Lower leg skin (tissue), 4 donors: ENCODE measurements at regions of chr2 and their contacts with region 1.

Region 1: GRCh38 chr2:181517685-181518301 is 60.6 kb downstream of the ITGA4 start:
- DNase-seq: no peak
- H3K4me3 ChIP-seq: no peak overlapping the region
- CTCF ChIP-seq: no peak
- POLR2A ChIP-seq: no peak

Region 2: GRCh38 chr2:181474227-181474881 is 43.4 kb before region 1 on chr2:
- intact Hi-C with region 1: loop called (anchors 1 kb)
- DNase-seq: no peak
- H3K4me3 ChIP-seq: no peak overlapping the region
- CTCF ChIP-seq: no peak
- POLR2A ChIP-seq: no peak